Endothelial cell of umbilical vein (primary cell): ENCODE measurements at regions of chr22 and their contacts with region 1.

Region 1: DNA sequence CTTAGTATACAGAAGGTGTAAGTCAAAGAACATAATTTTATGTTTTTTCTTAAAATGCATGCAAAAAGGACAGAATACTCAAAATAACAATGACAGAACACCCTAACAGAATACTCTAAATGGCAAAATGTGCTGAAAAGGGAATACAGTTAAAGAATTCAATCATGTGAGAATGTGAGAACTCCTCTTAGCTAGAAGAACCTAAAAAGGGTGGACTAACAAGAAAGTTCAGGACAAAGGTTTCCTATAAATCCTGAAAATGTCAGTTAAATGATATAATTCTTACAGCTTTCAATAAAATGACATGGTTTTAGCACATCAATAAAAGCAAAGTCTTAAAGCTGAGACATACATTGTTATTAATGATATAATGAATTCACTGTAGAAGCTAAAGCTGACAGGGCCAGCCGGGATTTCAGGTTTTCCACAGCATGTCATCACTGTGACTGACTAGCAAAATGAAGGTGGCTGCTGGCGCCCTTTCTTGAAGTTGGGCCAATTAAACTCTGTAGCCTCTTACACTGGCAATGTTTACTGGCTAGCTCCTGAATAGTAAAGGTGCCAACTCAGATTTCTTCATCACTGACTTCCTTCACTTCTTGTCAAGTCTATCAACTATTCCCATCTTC is 244.4 kb downstream of the TTC28 start:
- DNase-seq: no peak
- H3K4me3 ChIP-seq: no peak overlapping the region
- H3K27ac ChIP-seq: no peak overlapping the region
- H3K4me1 ChIP-seq: no peaks in the 10 kb centered on the region
- H3K27me3 ChIP-seq: no peaks in the 10 kb centered on the region
- CTCF ChIP-seq: no peak
- POLR2A ChIP-seq: no peak

Region 2: DNA sequence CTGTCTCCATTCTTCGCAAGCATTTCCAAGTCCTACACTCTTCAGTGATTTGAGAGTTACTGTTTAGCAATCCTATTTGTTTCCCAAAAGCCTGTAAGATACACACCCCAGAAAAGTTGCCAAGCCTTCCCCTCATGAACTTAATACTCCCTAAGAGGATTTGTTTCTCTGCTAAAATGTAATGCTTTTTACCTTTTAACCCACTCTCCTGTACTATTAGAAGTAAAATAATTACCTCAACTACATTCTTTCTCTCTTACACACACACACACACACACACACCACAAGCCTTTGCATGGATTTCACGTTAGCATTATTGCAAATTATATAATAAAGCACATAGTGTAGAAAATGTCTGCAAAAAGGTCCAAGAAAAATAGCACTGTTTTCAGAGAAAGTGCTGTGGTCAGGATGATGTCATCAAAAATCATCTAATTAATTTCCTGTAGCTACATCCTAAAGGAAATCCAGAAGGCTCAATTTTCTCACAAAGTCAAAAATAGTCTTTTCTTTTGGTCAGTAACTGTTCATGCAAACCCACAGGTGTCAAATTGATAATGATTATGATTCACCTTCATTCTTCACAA is 152.1 kb before region 1 on chr22:
- CTCF ChIA-PET with region 1: no interaction called
- POLR2A ChIA-PET with region 1: no interaction called
- dilution Hi-C with region 1: no loop called
- intact Hi-C with region 1: loop called (anchors 10 kb)
- DNase-seq: peak; percentile 73
- H3K4me3 ChIP-seq: no peak overlapping the region
- H3K27ac ChIP-seq: no peak overlapping the region
- H3K4me1 ChIP-seq: peaks cover 13% of the 10 kb centered on the region
- H3K27me3 ChIP-seq: no peaks in the 10 kb centered on the region
- CTCF ChIP-seq: no peak
- POLR2A ChIP-seq: no peak

Region 3: GRCh38 chr22:28414017-28414416 is 21.2 kb before region 1 on chr22:
- CTCF ChIA-PET with region 1: interaction called, 3 read pairs
- POLR2A ChIA-PET with region 1: no interaction called
- dilution Hi-C with region 1: no loop called
- intact Hi-C with region 1: loop called (anchors 2 kb)
- DNase-seq: peak; percentile 63
- H3K4me3 ChIP-seq: no peak overlapping the region
- H3K27ac ChIP-seq: no peak overlapping the region
- H3K4me1 ChIP-seq: peaks cover 14% of the 10 kb centered on the region
- H3K27me3 ChIP-seq: no peaks in the 10 kb centered on the region
- CTCF ChIP-seq: no peak
- POLR2A ChIP-seq: no peak